Activated naive CD4-positive, alpha-beta T cell treated with anti-CD3 and anti-CD28 coated beads for 36 hours (primary cell): ENCODE measurements at regions of chr10 and their contacts with region 1.

Region 1: DNA sequence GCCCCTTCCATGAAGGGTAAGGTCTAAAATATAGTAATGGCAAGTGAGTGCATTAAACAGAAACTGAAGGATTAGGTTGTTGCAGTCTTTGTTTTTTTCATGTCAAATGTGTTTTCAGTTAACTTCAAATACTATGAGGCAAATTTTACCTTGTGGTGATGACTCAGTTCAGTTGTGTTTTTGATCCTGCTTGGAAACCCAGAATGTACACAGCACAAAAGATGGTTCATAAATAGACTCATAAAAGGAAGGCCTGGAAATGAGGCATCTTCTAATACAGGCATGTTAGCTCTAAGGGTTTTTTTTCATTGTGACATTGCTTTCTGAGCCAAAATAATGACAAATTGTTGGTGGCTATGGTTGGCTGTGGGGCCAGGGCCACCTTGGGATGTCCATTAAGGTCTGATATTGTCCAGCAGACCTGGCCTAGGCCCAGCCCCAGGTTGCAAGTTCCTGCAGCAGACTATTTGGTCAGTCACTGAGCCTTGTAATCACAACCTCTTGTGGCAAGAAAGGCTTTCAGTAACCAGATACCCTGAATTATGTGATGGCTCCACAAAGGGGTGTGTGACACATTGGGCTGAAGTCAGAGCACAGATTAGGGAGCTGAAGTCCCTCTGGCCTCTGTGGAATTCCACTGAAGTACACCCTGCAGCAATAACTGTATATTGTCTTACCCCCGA is 69.0 kb upstream of the SAMD8 start:
- DNase-seq: peak; percentile 30
- H3K4me3 Mint-ChIP-seq: peak overlapping the region; percentile 20
- H3K27ac Mint-ChIP-seq: peak overlapping the region; percentile 87
- H3K4me1 Mint-ChIP-seq: peaks cover 45% of the 10 kb centered on the region
- H3K27me3 Mint-ChIP-seq: peaks cover 7% of the 10 kb centered on the region

Region 2: GRCh38 chr10:74460812-74461211 is 581.6 kb before region 1 on chr10:
- CTCF ChIA-PET with region 1: interaction called, 11 read pairs
- intact Hi-C with region 1: no loop called
- DNase-seq: no peak
- H3K4me3 Mint-ChIP-seq: no peak overlapping the region
- H3K27ac Mint-ChIP-seq: no peak overlapping the region
- H3K4me1 Mint-ChIP-seq: peaks cover 3% of the 10 kb centered on the region
- H3K27me3 Mint-ChIP-seq: no peaks in the 10 kb centered on the region

Region 3: DNA sequence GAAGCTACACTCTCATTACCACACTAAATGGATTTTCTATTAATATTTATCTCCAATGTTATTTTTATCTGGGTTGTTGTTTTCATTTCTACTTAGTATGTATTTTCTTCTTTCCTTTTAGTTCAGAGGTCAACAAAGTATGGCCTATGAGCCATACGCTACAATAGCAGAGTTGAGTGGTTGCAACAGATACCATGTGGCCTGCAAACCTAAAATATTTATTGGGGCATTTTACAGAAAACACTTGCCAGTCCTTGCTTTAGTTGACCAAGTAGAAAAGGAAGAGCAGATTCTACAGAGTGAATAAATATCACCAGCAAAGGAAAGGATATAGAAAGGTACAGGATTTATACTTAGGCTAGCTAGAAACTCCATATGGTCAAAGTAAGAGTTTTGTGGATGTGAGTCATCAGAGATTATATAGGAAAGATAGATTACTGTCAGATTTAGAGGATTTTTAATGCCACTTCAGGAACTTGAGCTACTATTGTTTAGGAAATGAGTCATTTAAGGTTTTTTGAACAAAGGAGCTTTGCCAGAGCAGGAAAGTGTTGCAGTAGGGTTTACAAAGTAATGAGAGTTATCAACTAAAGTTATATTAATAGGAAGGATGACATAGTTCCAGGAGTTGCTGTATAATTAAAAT is 539.3 kb before region 1 on chr10:
- CTCF ChIA-PET with region 1: no interaction called
- intact Hi-C with region 1: loop called (anchors 5 kb)
- DNase-seq: no peak
- H3K4me3 Mint-ChIP-seq: no peak overlapping the region
- H3K27ac Mint-ChIP-seq: peak overlapping the region; percentile 75
- H3K4me1 Mint-ChIP-seq: peaks cover 52% of the 10 kb centered on the region
- H3K27me3 Mint-ChIP-seq: no peaks in the 10 kb centered on the region

Region 4: DNA sequence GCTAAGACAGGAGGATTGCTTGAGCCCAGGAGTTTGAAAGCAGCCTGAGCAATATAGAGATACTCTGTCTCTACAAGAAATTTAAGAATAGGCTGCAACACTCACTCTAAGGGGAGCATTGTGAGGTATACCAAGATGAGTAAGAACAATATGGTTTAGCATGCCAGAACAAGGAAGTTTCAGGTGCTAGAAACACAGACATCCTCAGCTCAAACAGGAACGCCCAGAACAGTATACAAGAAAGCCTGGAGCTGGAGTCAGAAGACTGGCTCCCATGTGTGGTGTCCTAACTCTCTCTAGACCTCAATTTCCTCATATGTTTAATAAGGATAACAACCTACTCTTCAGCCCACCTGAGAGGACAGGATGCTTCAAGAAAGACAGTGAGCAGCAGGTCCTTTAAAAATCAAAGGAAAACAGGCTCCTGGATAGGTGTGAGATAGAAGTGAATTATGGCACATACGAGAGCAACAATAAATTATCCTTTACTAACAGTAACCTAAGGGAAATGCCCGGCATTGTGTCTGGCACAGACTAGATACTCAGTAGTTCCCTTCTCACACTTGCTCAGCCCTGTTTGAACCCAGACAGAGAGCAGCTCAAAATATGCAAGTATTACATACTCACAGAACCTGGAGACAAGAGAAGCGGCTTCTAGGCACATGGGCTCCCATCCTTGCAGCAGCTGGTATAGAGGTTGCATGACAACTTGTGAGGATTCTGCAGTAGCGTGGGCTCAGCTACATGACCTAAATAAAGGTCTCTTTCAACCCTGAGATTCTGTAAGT is 170.6 kb before region 1 on chr10:
- CTCF ChIA-PET with region 1: no interaction called
- intact Hi-C with region 1: no loop called
- DNase-seq: peak; percentile 53
- H3K4me3 Mint-ChIP-seq: peak overlapping the region; percentile 62
- H3K27ac Mint-ChIP-seq: peak overlapping the region; percentile 73
- H3K4me1 Mint-ChIP-seq: peaks cover 61% of the 10 kb centered on the region
- H3K27me3 Mint-ChIP-seq: no peaks in the 10 kb centered on the region